SK-N-SH (cell line): ENCODE measurements at regions of chr21 and their contacts with region 1.

Region 1: GRCh38 chr21:34603002-34603709 is 11.8 kb downstream of the RCAN1 start:
- DNase-seq: peak; percentile 73
- H3K4me3 ChIP-seq: peak overlapping the region in 1 of 2 experiments; percentile 9; a peak in 1 of 4 replicates
- H3K27ac ChIP-seq: no peak overlapping the region
- H3K4me1 ChIP-seq: peaks cover 3 to 5% of the 10 kb centered on the region in 2 experiments; a peak in 2 of 4 replicates
- H3K27me3 ChIP-seq: no peaks in the 10 kb centered on the region
- CTCF ChIP-seq: peak; percentile 76
- EP300 ChIP-seq: no peak
- RAD21 ChIP-seq: peak; percentile 84

Region 2: DNA sequence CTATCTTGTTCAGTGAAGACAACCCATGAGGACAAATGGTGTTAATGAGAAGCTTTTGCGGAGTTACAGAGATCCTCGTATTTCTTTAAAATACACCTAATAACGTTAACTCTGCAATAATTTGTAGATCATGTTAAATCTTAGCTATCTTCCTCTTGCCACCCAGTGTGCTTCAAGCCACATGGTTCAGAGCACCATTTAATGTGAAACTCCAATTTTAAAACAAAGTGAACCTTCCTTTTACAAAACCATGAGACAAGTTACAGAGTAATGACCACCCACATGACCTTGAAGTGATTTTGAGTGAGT is 241.1 kb before region 1 on chr21:
- CTCF ChIA-PET with region 1: interaction called, 35 read pairs
- POLR2A ChIA-PET with region 1: no interaction called
- DNase-seq: no peak
- H3K4me3 ChIP-seq: peak overlapping the region in 1 of 2 experiments; percentile 39; a peak in 1 of 4 replicates
- H3K27ac ChIP-seq: no peak overlapping the region
- H3K4me1 ChIP-seq: no peaks in the 10 kb centered on the region; a peak in 1 of 4 replicates
- H3K27me3 ChIP-seq: peaks cover 5% of the 10 kb centered on the region; the same call in 1 of the 2 replicates
- CTCF ChIP-seq: no peak
- EP300 ChIP-seq: no peak
- RAD21 ChIP-seq: no peak

Region 3: GRCh38 chr21:34367321-34367935 is 235.7 kb before region 1 on chr21:
- CTCF ChIA-PET with region 1: interaction called, 35 read pairs
- POLR2A ChIA-PET with region 1: no interaction called
- DNase-seq: peak; percentile 45
- H3K4me3 ChIP-seq: peak overlapping the region in 1 of 2 experiments; percentile 27; a peak in 1 of 4 replicates
- H3K27ac ChIP-seq: no peak overlapping the region
- H3K4me1 ChIP-seq: no peaks in the 10 kb centered on the region
- H3K27me3 ChIP-seq: no peaks in the 10 kb centered on the region; the same call in 1 of the 2 replicates
- CTCF ChIP-seq: peak; percentile 82
- EP300 ChIP-seq: no peak
- RAD21 ChIP-seq: peak; percentile 55

Region 4: GRCh38 chr21:34510148-34511142 is 92.7 kb before region 1 on chr21:
- CTCF ChIA-PET with region 1: interaction called, 17 read pairs
- POLR2A ChIA-PET with region 1: no interaction called
- DNase-seq: peak; percentile 27
- H3K4me3 ChIP-seq: no peak overlapping the region; a peak in 1 of 4 replicates
- H3K27ac ChIP-seq: no peak overlapping the region
- H3K4me1 ChIP-seq: no peaks in the 10 kb centered on the region
- H3K27me3 ChIP-seq: no peaks in the 10 kb centered on the region
- CTCF ChIP-seq: peak; percentile 79
- EP300 ChIP-seq: no peak
- RAD21 ChIP-seq: peak; percentile 73

Region 5: GRCh38 chr21:34614633-34615486 is 11.7 kb after region 1 on chr21 and contains the start of gene RCAN1:
- CTCF ChIA-PET with region 1: interaction called, 61 read pairs
- POLR2A ChIA-PET with region 1: no interaction called
- DNase-seq: peak; percentile 90
- H3K4me3 ChIP-seq: peak within 1 kb of the TSS; percentile 76 to 90
- H3K27ac ChIP-seq: peak within 1 kb of the TSS in 1 of 2 experiments; percentile 16; a peak in 2 of 4 replicates
- H3K4me1 ChIP-seq: peaks cover 0 to 6% of the 10 kb centered on the region in 2 experiments; a peak in 2 of 4 replicates
- H3K27me3 ChIP-seq: peaks cover 6% of the 10 kb centered on the region; the same call in 1 of the 2 replicates
- CTCF ChIP-seq: no peak
- EP300 ChIP-seq: no peak
- RAD21 ChIP-seq: no peak
- polyA plus RNA-seq, gene RCAN1: 16.7 and 22.0 TPM in 2 replicates

Region 6: DNA sequence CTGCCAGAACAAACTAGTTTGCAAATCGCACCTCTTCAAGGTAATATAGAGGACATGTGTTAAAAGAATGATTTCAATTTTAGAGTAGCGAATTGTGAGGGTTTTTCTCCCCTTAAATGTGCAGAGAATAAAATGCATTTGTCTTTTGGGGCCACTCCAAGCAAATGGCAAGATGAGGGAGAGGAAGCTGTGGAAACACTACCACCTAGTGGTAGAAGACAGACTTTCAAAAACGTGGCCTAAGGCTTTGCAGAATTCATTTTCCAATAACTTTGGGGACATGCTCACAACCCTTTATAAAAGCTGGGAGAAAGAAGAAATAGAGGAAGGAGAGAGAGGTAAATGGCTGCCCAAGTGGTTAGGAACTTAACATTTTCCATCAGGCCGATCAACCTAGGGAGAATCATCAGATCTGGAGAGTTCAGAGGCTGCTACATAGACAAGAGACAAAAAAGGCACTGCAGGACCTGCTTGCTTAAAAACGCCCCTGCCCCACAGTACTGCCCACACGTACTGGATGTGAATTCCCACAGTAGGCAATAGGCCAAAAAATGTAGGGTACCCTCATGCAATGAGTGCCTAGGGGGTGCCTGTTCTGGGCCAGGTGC is 27.5 kb after region 1 on chr21:
- CTCF ChIA-PET with region 1: interaction called, 16 read pairs
- POLR2A ChIA-PET with region 1: no interaction called
- DNase-seq: peak; percentile 63
- H3K4me3 ChIP-seq: no peak overlapping the region; a peak in 1 of 4 replicates
- H3K27ac ChIP-seq: no peak overlapping the region
- H3K4me1 ChIP-seq: no peaks in the 10 kb centered on the region
- H3K27me3 ChIP-seq: peaks cover 51% of the 10 kb centered on the region
- CTCF ChIP-seq: peak; percentile 85
- EP300 ChIP-seq: no peak
- RAD21 ChIP-seq: peak; percentile 94

Region 7: DNA sequence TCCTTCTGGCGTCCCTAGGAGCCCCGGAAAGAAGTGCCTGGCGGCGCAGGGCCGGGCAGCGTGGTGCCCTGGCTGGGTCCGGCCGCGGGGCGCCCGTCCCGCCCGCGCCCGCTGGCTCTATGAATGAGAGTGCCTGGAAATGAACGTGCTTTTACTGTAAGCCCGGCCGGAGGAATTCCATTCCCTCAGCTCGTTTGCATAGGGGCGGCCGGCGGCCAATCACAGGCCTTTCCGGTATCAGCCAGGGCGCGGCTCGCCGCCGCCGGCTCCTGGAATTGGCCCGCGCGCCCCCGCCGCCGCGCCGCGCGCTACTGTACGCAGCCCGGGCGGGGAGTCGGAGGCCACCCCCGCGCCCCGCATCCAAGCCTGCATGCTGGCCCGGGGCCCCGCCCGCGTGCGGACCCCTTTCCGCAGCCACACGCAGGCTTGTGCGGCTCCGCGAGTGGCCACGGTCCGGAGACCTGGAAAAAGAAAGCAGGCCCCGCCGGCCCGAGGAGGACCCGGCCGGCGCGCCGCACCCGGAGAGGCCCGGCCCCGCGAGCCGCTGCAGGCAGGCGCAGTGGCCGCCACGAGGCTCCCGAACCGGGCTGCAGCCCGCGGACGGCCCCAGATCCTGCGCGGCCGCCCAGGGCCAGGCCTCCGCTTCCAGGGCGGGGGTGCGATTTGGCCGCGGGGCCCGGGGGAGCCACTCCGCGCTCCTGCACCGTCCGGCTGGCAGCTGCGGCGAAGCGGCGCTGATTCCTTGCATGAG is 285.6 kb after region 1 on chr21:
- CTCF ChIA-PET with region 1: no interaction called
- POLR2A ChIA-PET with region 1: no interaction called
- DNase-seq: peak; percentile 93
- H3K4me3 ChIP-seq: peak overlapping the region; percentile 81
- H3K27ac ChIP-seq: peak overlapping the region; percentile 86 to 95
- H3K4me1 ChIP-seq: peaks cover 0 to 7% of the 10 kb centered on the region in 2 experiments; a peak in 2 of 4 replicates
- H3K27me3 ChIP-seq: no peaks in the 10 kb centered on the region
- CTCF ChIP-seq: no peak
- EP300 ChIP-seq: no peak
- RAD21 ChIP-seq: no peak

Region 8: DNA sequence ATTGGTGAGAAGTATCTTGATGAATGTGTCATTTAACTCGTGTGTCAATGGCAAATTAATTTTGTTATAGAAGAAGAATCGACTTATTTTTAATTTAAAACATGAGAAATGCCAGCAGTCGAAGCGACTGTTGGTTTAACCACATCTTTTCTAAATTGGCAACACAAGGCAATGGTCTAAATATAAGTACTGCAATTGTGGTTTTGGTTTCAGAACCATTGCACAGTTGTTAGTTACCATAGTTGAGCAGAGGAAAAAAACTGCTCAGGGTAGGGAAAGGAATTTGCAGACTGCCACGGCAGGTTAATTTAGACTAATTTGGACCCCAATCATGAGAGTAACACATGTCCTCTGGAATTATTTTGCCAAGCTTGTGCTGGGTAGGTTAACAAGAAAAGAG is 631.6 kb after region 1 on chr21:
- CTCF ChIA-PET with region 1: no interaction called
- POLR2A ChIA-PET with region 1: no interaction called
- DNase-seq: no peak
- H3K4me3 ChIP-seq: no peak overlapping the region
- H3K27ac ChIP-seq: no peak overlapping the region
- H3K4me1 ChIP-seq: peaks cover 0 to 2% of the 10 kb centered on the region in 2 experiments; a peak in 2 of 4 replicates
- H3K27me3 ChIP-seq: no peaks in the 10 kb centered on the region
- CTCF ChIP-seq: no peak
- EP300 ChIP-seq: no peak
- RAD21 ChIP-seq: no peak